Activated CD8-positive, alpha-beta T cell treated with anti-CD3 and anti-CD28 coated beads for 36 hours (primary cell): ENCODE measurements at regions of chr5 and their contacts with region 1.

Region 1: GRCh38 chr5:141420855-141421496 is at the start of gene PCDHGA11:
- DNase-seq: peak; percentile 69
- ATAC-seq: peak; percentile 61
- H3K4me3 Mint-ChIP-seq: peak within 1 kb of the TSS; percentile 74
- H3K27ac Mint-ChIP-seq: no peak within 1 kb of the TSS
- H3K4me1 Mint-ChIP-seq: peaks cover 8% of the 10 kb centered on the region
- H3K27me3 Mint-ChIP-seq: peaks cover 72% of the 10 kb centered on the region
- CTCF ChIP-seq: peak; percentile 76
- total RNA-seq, gene PCDHGA11: not detected

Region 2: GRCh38 chr5:141369994-141370848 is 50.8 kb before region 1 on chr5 and contains the start of gene PCDHGB3:
- CTCF ChIA-PET with region 1: interaction called, 14 read pairs
- POLR2A ChIA-PET with region 1: no interaction called
- intact Hi-C with region 1: no loop called
- DNase-seq: peak; percentile 48
- ATAC-seq: peak; percentile 74
- H3K4me3 Mint-ChIP-seq: peak within 1 kb of the TSS; percentile 58
- H3K27ac Mint-ChIP-seq: no peak within 1 kb of the TSS
- H3K4me1 Mint-ChIP-seq: peaks cover 2% of the 10 kb centered on the region
- H3K27me3 Mint-ChIP-seq: peaks cover 67% of the 10 kb centered on the region
- CTCF ChIP-seq: peak; percentile 27
- total RNA-seq, gene PCDHGB3: 0.07 to 0.16 TPM

Region 3: DNA sequence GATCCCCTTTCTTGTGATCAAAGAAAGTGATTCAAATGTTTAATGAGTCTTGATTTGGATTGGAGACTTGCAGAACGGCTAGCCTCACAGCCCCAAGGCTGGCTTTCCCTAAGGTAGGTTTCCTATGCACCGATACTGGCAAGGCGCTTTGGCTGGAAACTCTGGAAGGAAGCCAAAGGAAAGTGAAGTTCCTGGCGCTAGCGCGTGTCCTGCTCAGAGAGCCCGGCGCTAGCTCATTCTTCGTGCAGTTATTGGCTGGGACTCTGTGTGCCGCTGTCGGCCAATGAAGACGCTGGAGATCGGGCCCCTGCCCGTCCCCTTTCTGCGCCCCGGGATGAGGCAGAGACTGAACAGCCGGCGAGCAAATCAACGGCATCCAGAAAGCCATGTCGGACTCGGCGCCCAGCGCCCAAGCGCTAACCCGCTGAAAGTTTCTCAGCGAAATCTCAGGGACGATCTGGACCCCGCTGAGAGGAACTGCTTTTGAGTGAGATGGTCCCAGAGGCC is 54.7 kb after region 1 on chr5 and contains the start of gene PCDHGC3:
- CTCF ChIA-PET with region 1: interaction called, 10 read pairs
- POLR2A ChIA-PET with region 1: no interaction called
- intact Hi-C with region 1: no loop called
- DNase-seq: peak; percentile 69
- ATAC-seq: peak; percentile 91
- H3K4me3 Mint-ChIP-seq: peak within 1 kb of the TSS; percentile 77
- H3K27ac Mint-ChIP-seq: no peak within 1 kb of the TSS
- H3K4me1 Mint-ChIP-seq: peaks cover 25% of the 10 kb centered on the region
- H3K27me3 Mint-ChIP-seq: peaks cover 52% of the 10 kb centered on the region
- CTCF ChIP-seq: peak; percentile 24
- total RNA-seq, gene PCDHGC3: not detected

Region 4: GRCh38 chr5:141855265-141856036 is 434.5 kb after region 1 on chr5:
- CTCF ChIA-PET with region 1: no interaction called
- POLR2A ChIA-PET with region 1: no interaction called
- intact Hi-C with region 1: no loop called
- DNase-seq: no peak
- ATAC-seq: no peak
- H3K4me3 Mint-ChIP-seq: no peak overlapping the region
- H3K27ac Mint-ChIP-seq: no peak overlapping the region
- H3K4me1 Mint-ChIP-seq: no peaks in the 10 kb centered on the region
- H3K27me3 Mint-ChIP-seq: peaks cover 6% of the 10 kb centered on the region
- CTCF ChIP-seq: no peak